PC-3 (cell line): ENCODE measurements at regions of chr4 and their contacts with region 1.

Region 1: DNA sequence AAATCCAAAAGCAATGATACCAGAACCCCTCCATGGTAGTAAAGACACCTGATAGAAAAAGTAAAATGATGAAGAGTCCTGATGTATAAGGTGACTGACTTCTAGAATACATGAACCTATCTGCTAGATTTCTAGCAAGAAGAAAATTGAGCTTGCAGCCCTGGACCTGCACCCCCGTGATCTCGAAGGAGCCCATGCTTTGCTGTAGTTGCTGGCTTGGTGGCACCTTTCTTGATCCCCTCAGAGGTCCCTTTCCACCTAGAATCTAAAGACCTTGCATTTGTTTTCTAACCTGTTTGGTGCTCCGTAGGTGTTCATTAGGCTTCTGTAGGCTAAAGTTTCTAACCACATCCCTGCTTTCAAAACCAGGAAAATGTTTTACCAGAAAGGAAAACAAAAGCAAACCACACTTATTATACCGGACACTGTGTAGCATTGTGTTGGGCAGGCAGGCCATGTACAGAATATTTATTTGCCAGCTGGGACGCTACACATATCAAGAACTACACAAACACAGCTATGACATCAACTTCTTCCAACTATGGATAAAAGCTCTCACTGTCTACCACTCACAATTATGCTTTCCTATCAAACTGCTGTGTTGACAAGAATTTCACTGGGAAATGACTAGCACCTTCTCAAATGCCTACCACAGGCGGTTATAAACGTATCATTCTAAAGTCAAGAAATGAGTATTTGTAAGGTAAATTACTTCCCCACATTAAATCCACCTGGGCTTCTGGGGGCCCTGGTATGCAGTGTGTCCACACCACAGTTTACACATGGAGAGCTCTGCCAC is 316.2 kb downstream of the UNC5C start:
- DNase-seq: no peak
- ATAC-seq: no peak
- H3K4me3 ChIP-seq: no peak overlapping the region
- H3K27ac ChIP-seq: no peak overlapping the region
- H3K4me1 ChIP-seq: no peaks in the 10 kb centered on the region
- H3K27me3 ChIP-seq: no peaks in the 10 kb centered on the region
- CTCF ChIP-seq: no peak

Region 2: GRCh38 chr4:94897023-94897422 is 335.5 kb before region 1 on chr4:
- CTCF ChIA-PET with region 1: no interaction called
- POLR2A ChIA-PET with region 1: no interaction called
- intact Hi-C with region 1: no loop called
- DNase-seq: no peak
- ATAC-seq: no peak
- H3K4me3 ChIP-seq: no peak overlapping the region
- H3K27ac ChIP-seq: no peak overlapping the region
- H3K4me1 ChIP-seq: no peaks in the 10 kb centered on the region
- H3K27me3 ChIP-seq: no peaks in the 10 kb centered on the region
- CTCF ChIP-seq: no peak

Region 3: DNA sequence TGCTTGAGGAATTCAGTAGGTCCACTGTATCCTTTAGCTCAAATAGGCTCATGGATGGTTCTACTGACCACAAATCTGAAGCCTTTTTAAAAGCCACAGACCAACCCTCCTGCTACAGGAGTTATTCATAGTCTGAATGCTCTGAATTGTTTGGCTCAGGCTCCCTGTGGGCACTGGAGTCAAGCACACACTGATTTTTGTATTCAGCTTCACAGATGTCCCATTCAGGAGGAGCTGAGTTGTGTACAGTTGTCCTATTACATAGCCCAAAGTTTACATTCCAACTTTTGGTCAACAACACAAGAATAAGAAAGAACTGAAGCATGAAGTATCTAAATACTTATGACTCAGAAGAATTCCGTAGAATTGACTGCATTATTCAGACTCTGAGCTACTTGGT is 72.3 kb after region 1 on chr4:
- CTCF ChIA-PET with region 1: no interaction called
- POLR2A ChIA-PET with region 1: no interaction called
- intact Hi-C with region 1: no loop called
- DNase-seq: peak; percentile 94
- ATAC-seq: peak; percentile 95
- H3K4me3 ChIP-seq: no peak overlapping the region
- H3K27ac ChIP-seq: peak overlapping the region; percentile 87
- H3K4me1 ChIP-seq: peaks cover 26% of the 10 kb centered on the region
- H3K27me3 ChIP-seq: no peaks in the 10 kb centered on the region
- CTCF ChIP-seq: no peak

Region 4: DNA sequence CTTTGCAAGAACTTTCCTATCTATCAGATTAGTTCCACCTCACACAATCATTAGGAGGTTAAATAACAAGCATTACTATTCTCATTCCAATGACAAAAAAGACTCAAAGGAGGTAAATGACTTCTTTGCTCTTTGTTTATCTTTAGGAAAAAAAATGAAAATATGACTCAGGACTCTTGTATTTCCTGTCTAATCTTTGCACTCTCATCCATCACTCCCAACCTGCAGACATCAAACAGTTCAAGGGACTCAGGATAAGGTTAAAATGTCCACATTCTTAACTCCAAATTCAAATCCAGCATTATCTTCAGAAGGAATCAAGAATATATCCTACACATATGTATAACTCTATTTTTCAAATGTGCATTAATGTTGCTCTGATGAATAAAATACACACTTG is 176.6 kb after region 1 on chr4:
- CTCF ChIA-PET with region 1: no interaction called
- POLR2A ChIA-PET with region 1: no interaction called
- intact Hi-C with region 1: no loop called
- DNase-seq: peak; percentile 62
- ATAC-seq: peak; percentile 71
- H3K4me3 ChIP-seq: no peak overlapping the region
- H3K27ac ChIP-seq: no peak overlapping the region
- H3K4me1 ChIP-seq: peaks cover 16% of the 10 kb centered on the region
- H3K27me3 ChIP-seq: no peaks in the 10 kb centered on the region
- CTCF ChIP-seq: no peak

Region 5: DNA sequence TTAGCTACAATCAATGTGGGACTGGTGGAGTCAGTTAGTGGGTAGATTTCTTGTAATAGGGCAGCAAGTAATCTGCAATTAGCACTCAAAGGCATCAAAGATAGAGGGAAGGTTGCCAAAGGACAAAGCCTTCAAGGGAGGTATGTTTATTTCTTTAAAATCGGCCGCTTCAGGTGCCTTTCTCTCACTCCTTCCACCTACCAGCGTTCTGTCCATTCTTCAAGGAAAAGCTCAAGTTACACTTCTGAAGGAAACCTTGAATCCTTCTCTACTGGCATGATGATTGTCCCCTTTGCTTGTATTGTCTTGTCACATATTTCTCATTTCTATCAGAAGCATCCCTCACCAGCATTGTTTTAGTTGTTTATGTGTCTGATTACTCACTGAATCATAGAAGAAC is 1956.0 kb after region 1 on chr4:
- CTCF ChIA-PET with region 1: no interaction called
- POLR2A ChIA-PET with region 1: interaction called, 12 read pairs
- intact Hi-C with region 1: no loop called
- DNase-seq: no peak
- ATAC-seq: no peak
- H3K4me3 ChIP-seq: no peak overlapping the region
- H3K27ac ChIP-seq: no peak overlapping the region
- H3K4me1 ChIP-seq: no peaks in the 10 kb centered on the region
- H3K27me3 ChIP-seq: no peaks in the 10 kb centered on the region
- CTCF ChIP-seq: no peak